ENCODE measurements at regions of chr9 and their contacts with region 1.

Region 1: GRCh38 chr9:124617471-124618141 is 110.4 kb upstream of the NR5A1 start:
- DNase-seq: peak; percentile 56
- ATAC-seq: peak; percentile 79
- H3K4me3 ChIP-seq: no peak overlapping the region
- H3K27ac ChIP-seq: no peak overlapping the region
- H3K4me1 ChIP-seq: peaks cover 15% of the 10 kb centered on the region; the same call in 1 of the 2 replicates
- H3K27me3 ChIP-seq: no peaks in the 10 kb centered on the region
- CTCF ChIP-seq: peak; percentile 90 to 95 (median 94); a peak in 5 of 6 replicates
- EP300 ChIP-seq: no peak
- POLR2A ChIP-seq: no peak
- RAD21 ChIP-seq: peak; percentile 99

Region 2: DNA sequence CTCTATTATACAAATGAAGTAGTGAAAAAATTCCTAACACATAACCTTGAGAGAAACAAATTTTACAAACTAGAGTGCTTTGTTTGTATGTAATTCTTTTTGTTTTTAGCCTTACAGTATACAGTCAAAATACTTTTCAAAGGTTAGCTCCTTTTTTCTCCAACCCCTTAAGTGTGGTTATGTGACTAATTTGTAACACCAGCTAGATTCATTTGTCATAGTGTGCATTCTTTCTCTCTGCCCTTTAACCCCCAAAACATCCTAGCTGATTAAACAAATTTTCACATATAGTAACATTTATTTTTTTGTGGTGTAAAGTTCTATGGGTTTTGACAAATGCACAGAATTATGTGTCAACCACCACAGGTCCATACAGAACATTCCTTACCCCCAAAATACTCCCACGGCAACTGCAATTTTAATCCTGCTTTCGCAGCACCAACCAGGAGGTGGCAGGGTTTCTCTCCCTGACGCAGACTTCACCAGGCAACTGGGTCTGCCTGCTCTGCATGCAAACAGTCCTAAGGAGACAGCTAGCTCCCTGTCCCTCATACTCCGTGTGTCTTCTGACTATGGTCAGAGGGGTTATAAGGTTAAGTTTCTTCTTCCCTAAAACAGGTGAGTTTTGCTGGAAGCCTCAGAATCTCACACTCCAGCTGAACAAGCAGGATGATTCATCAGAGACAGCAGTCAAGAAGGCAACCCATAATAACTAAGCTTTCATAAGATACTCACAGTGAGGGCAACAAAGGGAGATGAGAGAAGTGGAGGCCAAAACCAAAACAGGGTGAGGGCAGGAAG is 65.9 kb before region 1 on chr9:
- CTCF ChIA-PET with region 1: interaction called, 39 read pairs
- POLR2A ChIA-PET with region 1: no interaction called
- RAD21 ChIA-PET with region 1: interaction called, 23 read pairs
- SMC1A ChIA-PET with region 1: interaction called, 14 read pairs
- in situ Hi-C with region 1: no loop called
- intact Hi-C with region 1: no loop called
- DNase-seq: peak; percentile 4
- ATAC-seq: peak; percentile 71
- H3K4me3 ChIP-seq: no peak overlapping the region
- H3K27ac ChIP-seq: no peak overlapping the region
- H3K4me1 ChIP-seq: no peaks in the 10 kb centered on the region
- H3K27me3 ChIP-seq: no peaks in the 10 kb centered on the region
- CTCF ChIP-seq: peak; percentile 28 to 69 (median 61); a peak in 5 of 6 replicates
- EP300 ChIP-seq: no peak
- POLR2A ChIP-seq: no peak
- RAD21 ChIP-seq: peak; percentile 88

Region 3: GRCh38 chr9:124652203-124652992 is 34.8 kb after region 1 on chr9:
- CTCF ChIA-PET with region 1: interaction called, 95 read pairs
- POLR2A ChIA-PET with region 1: interaction called, 146 read pairs
- RAD21 ChIA-PET with region 1: interaction called, 172 read pairs
- SMC1A ChIA-PET with region 1: interaction called, 160 read pairs
- in situ Hi-C with region 1: no loop called
- intact Hi-C with region 1: no loop called
- DNase-seq: no peak
- ATAC-seq: no peak
- H3K4me3 ChIP-seq: no peak overlapping the region
- H3K27ac ChIP-seq: no peak overlapping the region
- H3K4me1 ChIP-seq: no peaks in the 10 kb centered on the region
- H3K27me3 ChIP-seq: no peaks in the 10 kb centered on the region
- CTCF ChIP-seq: no peak
- EP300 ChIP-seq: no peak
- POLR2A ChIP-seq: no peak
- RAD21 ChIP-seq: no peak

Region 4: GRCh38 chr9:124685217-124685616 is 67.6 kb after region 1 on chr9:
- CTCF ChIA-PET with region 1: interaction called, 15 read pairs
- POLR2A ChIA-PET with region 1: no interaction called
- RAD21 ChIA-PET with region 1: interaction called, 10 read pairs
- SMC1A ChIA-PET with region 1: interaction called, 25 read pairs
- in situ Hi-C with region 1: no loop called
- intact Hi-C with region 1: no loop called
- DNase-seq: no peak
- ATAC-seq: no peak
- H3K4me3 ChIP-seq: no peak overlapping the region
- H3K27ac ChIP-seq: no peak overlapping the region
- H3K4me1 ChIP-seq: peaks cover 5% of the 10 kb centered on the region
- H3K27me3 ChIP-seq: no peaks in the 10 kb centered on the region
- CTCF ChIP-seq: no peak
- EP300 ChIP-seq: no peak
- POLR2A ChIP-seq: no peak
- RAD21 ChIP-seq: no peak

Region 5: GRCh38 chr9:124754289-124754688 is 136.7 kb after region 1 on chr9:
- CTCF ChIA-PET with region 1: interaction called, 181 read pairs
- POLR2A ChIA-PET with region 1: interaction called, 3 read pairs
- RAD21 ChIA-PET with region 1: interaction called, 14 read pairs
- SMC1A ChIA-PET with region 1: interaction called, 11 read pairs
- in situ Hi-C with region 1: no loop called
- intact Hi-C with region 1: no loop called
- DNase-seq: no peak
- ATAC-seq: peak; percentile 50; the same call in 1 of the 3 replicates
- H3K4me3 ChIP-seq: no peak overlapping the region
- H3K27ac ChIP-seq: no peak overlapping the region
- H3K4me1 ChIP-seq: peaks cover 14% of the 10 kb centered on the region
- H3K27me3 ChIP-seq: no peaks in the 10 kb centered on the region
- CTCF ChIP-seq: peak; percentile 10 to 41 (median 12); a peak in 3 of 6 replicates
- EP300 ChIP-seq: no peak
- POLR2A ChIP-seq: no peak
- RAD21 ChIP-seq: peak; percentile 57

Region 6: DNA sequence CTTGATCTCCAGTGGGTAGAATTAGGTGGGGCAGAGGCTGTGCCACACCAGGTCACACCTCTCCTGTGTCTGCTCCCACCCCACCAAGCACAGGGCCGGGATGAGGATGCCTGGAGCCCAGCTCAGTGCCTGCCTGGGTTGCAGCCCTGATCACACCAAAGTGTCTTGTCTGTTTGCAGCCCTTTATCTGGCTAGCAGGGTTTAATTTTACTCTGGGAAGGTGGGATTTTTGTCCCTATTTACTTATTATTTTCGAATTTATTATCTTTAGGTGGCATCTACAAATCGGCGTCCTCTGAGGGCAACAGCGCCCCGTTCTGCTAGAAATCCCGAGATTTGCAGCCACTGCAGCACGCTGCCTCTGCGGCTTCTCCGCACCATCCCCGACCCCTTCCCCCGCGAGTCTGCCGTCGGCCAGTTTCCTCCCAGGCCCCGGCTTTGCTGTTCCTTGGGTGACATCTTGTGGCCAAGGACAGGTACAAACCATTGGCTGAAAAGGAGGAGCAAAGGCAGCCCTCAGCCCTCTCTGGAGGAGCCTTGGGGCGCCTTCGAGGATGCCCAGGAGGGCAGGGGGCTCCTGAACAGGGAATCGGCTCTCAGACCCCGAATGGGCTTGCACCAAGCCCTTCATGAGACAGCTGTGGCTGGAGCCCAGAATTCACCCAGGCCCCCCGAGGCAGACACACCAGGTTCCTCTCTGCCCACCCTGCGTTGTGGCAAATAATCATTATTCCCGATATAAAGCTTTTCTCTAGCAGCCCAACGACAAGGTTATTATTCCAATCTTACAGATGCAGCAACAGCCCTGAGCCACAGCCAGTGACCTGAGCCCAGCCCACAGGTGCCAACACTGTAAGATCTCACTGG is 757.1 kb after region 1 on chr9:
- CTCF ChIA-PET with region 1: no interaction called
- POLR2A ChIA-PET with region 1: no interaction called
- RAD21 ChIA-PET with region 1: no interaction called
- SMC1A ChIA-PET with region 1: no interaction called
- in situ Hi-C with region 1: loop called (anchors 10 kb)
- intact Hi-C with region 1: no loop called
- DNase-seq: peak; percentile 16
- ATAC-seq: peak; percentile 98
- H3K4me3 ChIP-seq: no peak overlapping the region
- H3K27ac ChIP-seq: no peak overlapping the region
- H3K4me1 ChIP-seq: 0 out of 2 replicates have a peak, but pooled peaks cover 3% of the 10 kb centered on the region
- H3K27me3 ChIP-seq: peaks cover 0 to 2% of the 10 kb centered on the region in 2 experiments; a peak in 1 of 4 replicates
- CTCF ChIP-seq: peak; percentile 82 to 87 (median 83)
- EP300 ChIP-seq: no peak
- POLR2A ChIP-seq: no peak
- RAD21 ChIP-seq: peak; percentile 100

Region 7: GRCh38 chr9:125446581-125447094 is 829.0 kb after region 1 on chr9:
- CTCF ChIA-PET with region 1: no interaction called
- POLR2A ChIA-PET with region 1: no interaction called
- RAD21 ChIA-PET with region 1: no interaction called
- SMC1A ChIA-PET with region 1: no interaction called
- in situ Hi-C with region 1: no loop called
- intact Hi-C with region 1: no loop called
- DNase-seq: peak; percentile 92
- ATAC-seq: peak; percentile 99
- H3K4me3 ChIP-seq: no peak overlapping the region
- H3K27ac ChIP-seq: peak overlapping the region; percentile 52
- H3K4me1 ChIP-seq: peaks cover 14% of the 10 kb centered on the region
- H3K27me3 ChIP-seq: no peaks in the 10 kb centered on the region
- CTCF ChIP-seq: no peak
- EP300 ChIP-seq: peak; percentile 80 to 83
- POLR2A ChIP-seq: no peak
- RAD21 ChIP-seq: no peak

Measured in GM12878 (cell line).